Sciatic nerve (tissue), 2 donors: ENCODE measurements at regions of chr1 and their contacts with region 1.

Region 1: DNA sequence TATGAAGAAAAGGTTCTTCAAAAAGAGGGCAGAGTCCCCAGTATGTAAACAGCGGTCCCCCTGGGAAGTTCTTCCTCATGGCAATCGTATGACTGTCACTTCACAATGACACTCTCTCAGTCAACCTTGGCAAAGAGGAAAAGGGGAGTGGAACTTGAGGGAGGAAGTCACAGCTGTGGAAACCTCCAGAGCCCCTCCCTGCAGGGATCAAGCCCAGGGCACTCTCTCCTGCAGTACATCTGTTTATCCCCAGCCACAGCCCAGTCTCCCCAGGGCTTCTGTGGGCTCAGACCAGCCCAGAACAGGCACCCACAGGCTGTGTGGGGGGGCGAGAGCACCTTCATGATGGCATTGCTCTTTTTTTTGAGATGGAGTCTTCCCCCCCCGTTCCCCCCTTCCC is 2.0 kb downstream of the ATP13A2 start:
- DNase-seq: no peak
- ATAC-seq: no peak

Region 2: GRCh38 chr1:16904560-16905111 is 105.1 kb before region 1 on chr1:
- intact Hi-C with region 1: no loop called
- DNase-seq: peak; percentile 97
- ATAC-seq: peak; percentile 100

Region 3: DNA sequence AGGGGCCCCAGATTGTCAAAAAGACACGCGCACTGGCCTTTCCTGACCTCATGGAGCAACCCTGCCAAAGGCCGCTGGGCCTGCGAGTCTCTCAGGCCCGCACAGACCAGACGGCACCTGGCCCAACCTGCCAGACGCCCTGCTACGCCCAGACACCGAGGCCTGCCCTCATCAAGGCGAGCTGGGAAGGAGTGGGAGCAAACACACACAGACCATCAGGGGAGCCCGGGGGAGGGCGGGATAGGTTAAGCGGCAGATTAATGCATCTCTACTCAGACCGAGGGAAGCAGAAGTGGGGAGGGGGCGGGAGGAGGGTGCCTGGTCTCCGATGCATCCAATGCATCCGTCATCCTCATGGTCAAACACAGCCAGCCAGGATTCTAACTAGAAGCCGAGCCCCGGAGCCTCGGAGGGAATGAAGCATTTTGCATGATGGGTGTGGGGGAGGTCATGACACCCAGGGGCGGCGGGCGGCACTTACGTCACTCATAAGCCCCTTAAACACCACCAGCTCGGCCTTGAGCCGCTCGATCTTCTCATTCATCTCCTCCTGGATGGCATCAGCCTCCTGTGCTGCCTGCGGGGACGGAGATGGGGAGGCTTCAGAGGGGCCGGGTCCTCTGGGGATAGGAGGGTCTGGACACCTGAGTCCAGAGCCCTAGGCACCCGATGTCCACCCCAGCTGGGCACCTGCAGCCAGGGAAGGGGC is 1909.6 kb after region 1 on chr1:
- intact Hi-C with region 1: loop called (anchors 5 kb)
- DNase-seq: no peak
- ATAC-seq: no peak